Heart right ventricle (tissue), 16 donors: ENCODE measurements at regions of chr3 and their contacts with region 1.

Region 1: GRCh38 chr3:48989796-48990635 is at the start of gene P4HTM:
- DNase-seq: peak; percentile 83 to 88
- ATAC-seq: peak; percentile 84 to 92 (median 90)
- H3K4me3 ChIP-seq: peak within 1 kb of the TSS; percentile 55 to 95 (median 82)
- H3K27ac ChIP-seq: peak within 1 kb of the TSS; percentile 71 to 93 (median 88)
- H3K4me1 ChIP-seq: peaks cover 8 to 40% (median 26%) of the 10 kb centered on the region in 9 donors
- H3K27me3 ChIP-seq: no peaks in the 10 kb centered on the region
- CTCF ChIP-seq: peak in 8 of 9 donors; percentile 27 to 65 (median 36)
- total RNA-seq, gene P4HTM: 23.8 to 41.7 (median 30.8) TPM

Region 2: DNA sequence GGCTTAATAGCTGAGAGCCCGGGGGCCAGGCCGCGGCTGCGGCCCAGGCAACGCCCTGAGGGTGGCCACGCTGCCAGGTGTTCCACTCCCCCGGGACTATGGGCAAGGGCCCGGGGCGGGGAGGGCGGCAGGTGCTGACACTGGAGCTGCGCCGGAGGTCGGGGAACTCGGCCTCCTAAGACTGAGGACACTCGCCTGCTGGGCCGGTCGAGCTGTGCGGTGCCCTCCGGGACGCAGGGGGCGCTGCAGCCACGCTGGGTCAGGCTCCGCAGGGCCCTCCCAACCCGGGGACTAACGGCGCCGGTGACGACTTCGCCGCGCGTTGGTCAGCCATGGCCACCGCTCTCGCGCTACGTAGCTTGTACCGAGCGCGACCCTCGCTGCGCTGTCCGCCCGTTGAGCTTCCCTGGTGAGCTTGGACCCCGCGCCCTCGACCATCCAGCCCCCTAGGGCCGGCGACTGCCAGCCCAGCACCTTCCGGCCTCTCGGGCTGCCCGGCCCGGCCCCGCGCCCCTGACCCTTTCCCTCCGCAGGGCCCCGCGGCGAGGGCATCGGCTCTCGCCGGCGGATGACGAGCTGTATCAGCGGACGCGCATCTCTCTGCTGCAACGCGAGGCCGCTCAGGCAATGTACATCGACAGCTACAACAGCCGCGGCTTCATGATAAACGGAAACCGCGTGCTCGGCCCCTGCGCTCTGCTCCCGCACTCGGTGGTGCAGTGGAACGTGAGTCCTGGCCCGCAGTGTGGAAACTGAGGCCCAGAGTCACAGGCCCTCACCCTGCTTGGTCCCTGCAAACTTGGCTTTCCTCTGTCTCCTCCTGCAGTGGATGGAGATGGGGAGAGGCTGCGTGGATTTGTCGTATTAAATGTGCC is 32.0 kb after region 1 on chr3 and contains the start of gene NDUFAF3:
- intact Hi-C with region 1: loop called in 3 of 10 experiments (anchors 1 to 2 kb)
- DNase-seq: peak; percentile 92 to 95
- ATAC-seq: peak; percentile 82 to 91 (median 89)
- H3K4me3 ChIP-seq: peak within 1 kb of the TSS; percentile 69 to 99 (median 92)
- H3K27ac ChIP-seq: peak within 1 kb of the TSS; percentile 98 to 100 (median 100)
- H3K4me1 ChIP-seq: peaks cover 8 to 72% (median 49%) of the 10 kb centered on the region in 9 donors
- H3K27me3 ChIP-seq: no peaks in the 10 kb centered on the region
- CTCF ChIP-seq: peak; percentile 92 to 100 (median 99)
- total RNA-seq, gene NDUFAF3: 154 to 186 (median 167) TPM

Region 3: GRCh38 chr3:49028673-49029562 is 38.9 kb after region 1 on chr3 and contains the start of gene IMPDH2:
- intact Hi-C with region 1: loop called in 1 of 10 experiments (anchors 1 kb)
- DNase-seq: peak; percentile 93 to 95
- ATAC-seq: peak; percentile 93 to 98 (median 97)
- H3K4me3 ChIP-seq: peak within 1 kb of the TSS; percentile 49 to 97 (median 67)
- H3K27ac ChIP-seq: peak within 1 kb of the TSS; percentile 57 to 98 (median 92)
- H3K4me1 ChIP-seq: peaks cover 6 to 49% (median 19%) of the 10 kb centered on the region in 9 donors
- H3K27me3 ChIP-seq: no peaks in the 10 kb centered on the region
- CTCF ChIP-seq: peak in 5 of 9 donors; percentile 13 to 51 (median 35)
- total RNA-seq, gene IMPDH2: 40.7 to 70.3 (median 58.4) TPM

Region 4: GRCh38 chr3:49093853-49094767 is 104.1 kb after region 1 on chr3 and contains the start of gene QRICH1:
- intact Hi-C with region 1: loop called in 3 of 10 experiments (anchors 5 to 10 kb)
- DNase-seq: peak; percentile 96 to 98
- ATAC-seq: peak; percentile 90 to 96 (median 94)
- H3K4me3 ChIP-seq: peak within 1 kb of the TSS; percentile 71 to 99 (median 90)
- H3K27ac ChIP-seq: peak within 1 kb of the TSS; percentile 84 to 98 (median 94)
- H3K4me1 ChIP-seq: peaks cover 17 to 64% (median 48%) of the 10 kb centered on the region in 9 donors
- H3K27me3 ChIP-seq: no peaks in the 10 kb centered on the region
- CTCF ChIP-seq: peak; percentile 28 to 72 (median 54)
- total RNA-seq, gene QRICH1: 54.5 to 72.5 (median 58.7) TPM

Region 5: GRCh38 chr3:49445381-49445780 is 455.4 kb after region 1 on chr3:
- intact Hi-C with region 1: loop called in 5 of 10 experiments (anchors 5 kb)
- DNase-seq: no peak
- ATAC-seq: no peak
- H3K4me3 ChIP-seq: no peak overlapping the region
- H3K27ac ChIP-seq: peak overlapping the region in 1 of 10 donors; percentile 86
- H3K4me1 ChIP-seq: peaks cover 0 to 35% (median 14%) of the 10 kb centered on the region in 9 donors
- H3K27me3 ChIP-seq: no peaks in the 10 kb centered on the region
- CTCF ChIP-seq: no peak

Region 6: GRCh38 chr3:49454458-49454857 is 464.4 kb after region 1 on chr3:
- intact Hi-C with region 1: loop called in 5 of 10 experiments (anchors 5 kb)
- DNase-seq: no peak
- ATAC-seq: peak in 6 of 8 donors; percentile 34 to 75 (median 65)
- H3K4me3 ChIP-seq: no peak overlapping the region
- H3K27ac ChIP-seq: peak overlapping the region in 8 of 10 donors; percentile 7 to 76 (median 54)
- H3K4me1 ChIP-seq: peaks cover 9 to 38% (median 19%) of the 10 kb centered on the region in 9 donors
- H3K27me3 ChIP-seq: no peaks in the 10 kb centered on the region
- CTCF ChIP-seq: peak in 8 of 9 donors; percentile 19 to 57 (median 38)